SK-N-SH (cell line): ENCODE measurements at regions of chr19 and their contacts with region 1.

Region 1: GRCh38 chr19:2962045-2962561 is 15.3 kb upstream of the TLE6 start:
- DNase-seq: peak; percentile 77
- H3K4me3 ChIP-seq: peak overlapping the region in 1 of 2 experiments; percentile 37; a peak in 1 of 4 replicates
- H3K27ac ChIP-seq: no peak overlapping the region
- H3K4me1 ChIP-seq: no peaks in the 10 kb centered on the region
- H3K27me3 ChIP-seq: 0 out of 2 replicates have a peak, but pooled peaks cover 3% of the 10 kb centered on the region
- CTCF ChIP-seq: peak; percentile 83
- EP300 ChIP-seq: no peak; a peak in 1 of 4 replicates
- RAD21 ChIP-seq: peak; percentile 94

Region 2: DNA sequence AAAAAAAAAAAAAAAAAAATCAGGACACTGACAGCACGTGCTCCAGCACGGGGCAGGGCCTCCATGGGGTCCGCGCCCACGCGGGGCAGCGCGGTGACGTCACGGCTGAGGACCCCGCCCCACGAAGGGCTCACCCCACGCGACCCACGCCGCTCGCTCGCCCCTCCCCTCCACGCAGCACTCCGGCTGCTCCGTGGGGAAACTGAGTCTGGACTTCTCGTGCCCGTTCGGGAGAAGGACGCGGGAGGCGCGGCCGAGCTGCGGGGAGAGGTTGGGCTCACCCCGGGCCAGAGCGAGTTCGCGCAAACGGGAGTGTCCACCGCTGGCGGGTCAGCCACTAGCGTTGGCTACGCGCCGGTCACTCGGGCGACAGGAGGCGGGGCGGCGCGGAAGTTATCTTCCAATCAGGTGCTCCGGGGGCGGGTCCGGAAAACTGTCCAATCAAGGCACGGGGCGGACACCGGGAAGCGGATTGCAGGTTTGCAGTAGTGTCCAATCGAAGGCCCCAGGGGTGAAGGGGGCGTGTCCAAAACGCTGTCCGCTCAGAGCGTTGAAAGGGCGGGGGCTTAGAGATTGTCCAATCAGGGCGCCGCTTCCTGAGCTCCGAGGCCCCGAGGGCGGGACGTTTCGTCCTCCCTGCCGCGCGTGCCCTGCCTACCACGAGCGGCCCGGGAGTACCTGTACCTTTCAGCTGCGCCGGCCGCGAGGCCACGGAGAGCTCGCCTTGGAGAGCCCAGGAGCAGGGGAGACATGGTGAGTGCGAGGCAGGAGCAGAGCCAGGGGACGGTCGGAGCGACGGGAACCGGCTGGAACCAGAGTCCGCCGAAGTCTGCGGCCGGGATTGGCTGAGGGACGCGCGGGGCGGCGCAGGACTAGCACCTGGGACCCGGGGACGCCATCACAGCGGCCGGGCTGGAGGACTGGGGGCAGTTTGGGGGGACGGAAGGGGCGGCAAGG is 61.5 kb before region 1 on chr19 and contains the start of gene ZNF57:
- CTCF ChIA-PET with region 1: no interaction called
- POLR2A ChIA-PET with region 1: no interaction called
- DNase-seq: peak; percentile 99
- H3K4me3 ChIP-seq: peak within 1 kb of the TSS; percentile 80 to 81
- H3K27ac ChIP-seq: peak within 1 kb of the TSS; percentile 61 to 74; a peak in 3 of 4 replicates
- H3K4me1 ChIP-seq: peaks cover 0 to 6% of the 10 kb centered on the region in 2 experiments; a peak in 1 of 4 replicates
- H3K27me3 ChIP-seq: no peaks in the 10 kb centered on the region
- CTCF ChIP-seq: no peak
- EP300 ChIP-seq: no peak
- RAD21 ChIP-seq: no peak
- polyA plus RNA-seq, gene ZNF57: 2.1 and 3.2 TPM in 2 replicates

Region 3: GRCh38 chr19:2977001-2977685 is 15.0 kb after region 1 on chr19 and contains the start of gene TLE6:
- CTCF ChIA-PET with region 1: interaction called, 12 read pairs
- POLR2A ChIA-PET with region 1: no interaction called
- DNase-seq: peak; percentile 97
- H3K4me3 ChIP-seq: peak within 1 kb of the TSS; percentile 42 to 65
- H3K27ac ChIP-seq: no peak within 1 kb of the TSS
- H3K4me1 ChIP-seq: peaks cover 0 to 8% of the 10 kb centered on the region in 2 experiments; a peak in 2 of 4 replicates
- H3K27me3 ChIP-seq: no peaks in the 10 kb centered on the region
- CTCF ChIP-seq: no peak
- EP300 ChIP-seq: peak; percentile 55 to 72; a peak in 2 of 4 replicates
- RAD21 ChIP-seq: no peak
- polyA plus RNA-seq, gene TLE6: 2.6 and 3.3 TPM in 2 replicates

Region 4: GRCh38 chr19:3108775-3109174 is 146.7 kb after region 1 on chr19:
- CTCF ChIA-PET with region 1: interaction called, 154 read pairs
- POLR2A ChIA-PET with region 1: no interaction called
- DNase-seq: peak; percentile 84
- H3K4me3 ChIP-seq: no peak overlapping the region
- H3K27ac ChIP-seq: no peak overlapping the region
- H3K4me1 ChIP-seq: no peaks in the 10 kb centered on the region
- H3K27me3 ChIP-seq: no peaks in the 10 kb centered on the region
- CTCF ChIP-seq: peak; percentile 85
- EP300 ChIP-seq: no peak
- RAD21 ChIP-seq: peak; percentile 63

Region 5: GRCh38 chr19:3163230-3163886 is 201.3 kb after region 1 on chr19:
- CTCF ChIA-PET with region 1: interaction called, 27 read pairs
- POLR2A ChIA-PET with region 1: no interaction called
- DNase-seq: peak; percentile 93
- H3K4me3 ChIP-seq: peak overlapping the region in 1 of 2 experiments; percentile 19; a peak in 2 of 4 replicates
- H3K27ac ChIP-seq: no peak overlapping the region
- H3K4me1 ChIP-seq: no peaks in the 10 kb centered on the region; a peak in 1 of 4 replicates
- H3K27me3 ChIP-seq: no peaks in the 10 kb centered on the region
- CTCF ChIP-seq: peak; percentile 92
- EP300 ChIP-seq: no peak
- RAD21 ChIP-seq: peak; percentile 91